HEK293T (cell line): ENCODE measurements at regions of chr6 and their contacts with region 1.

Region 1: GRCh38 chr6:158143700-158144099 is 24.4 kb downstream of the SERAC1 start:
- DNase-seq: peak; percentile 35

Region 2: DNA sequence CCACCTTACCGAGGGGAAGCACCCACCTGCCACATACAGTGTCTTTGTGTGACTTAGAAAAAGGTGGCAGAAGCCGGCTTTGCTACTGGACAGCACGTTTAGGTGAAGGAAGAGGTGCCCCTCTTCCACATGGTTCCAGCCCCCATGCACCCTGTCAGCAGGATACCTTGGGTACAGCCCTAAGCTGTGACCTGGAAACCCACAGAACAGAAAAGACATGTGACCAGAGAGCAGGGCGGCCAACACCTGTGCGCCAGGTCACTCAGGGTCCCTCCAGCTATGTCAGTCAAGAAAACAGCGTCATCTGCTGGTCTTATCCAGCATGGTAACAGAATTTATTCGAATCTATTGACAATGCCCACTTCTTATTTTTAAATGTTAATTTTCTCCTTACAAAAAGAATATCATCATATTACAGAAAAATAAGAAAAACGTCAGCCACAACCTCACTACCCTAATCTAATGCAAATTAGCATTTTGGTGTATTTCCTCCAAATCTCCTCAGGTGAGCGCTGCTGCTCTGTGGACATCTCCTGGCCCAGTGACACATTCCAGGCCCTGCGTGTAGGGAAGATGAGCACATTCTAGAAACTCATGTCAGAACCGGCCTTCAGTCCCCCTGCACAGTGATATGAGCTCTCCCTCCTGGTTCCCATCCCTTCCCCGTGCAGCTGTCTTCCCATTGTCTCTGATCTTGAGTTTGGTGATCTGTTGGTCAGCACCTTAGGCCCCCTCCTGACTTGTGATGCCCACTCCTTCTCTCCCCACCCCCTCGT is 61.7 kb after region 1 on chr6:
- CTCF ChIA-PET with region 1: interaction called, 13 read pairs
- POLR2A ChIA-PET with region 1: no interaction called
- DNase-seq: peak; percentile 51